KBM-7 (cell line): ENCODE measurements at regions of chr1 and their contacts with region 1.

Region 1: DNA sequence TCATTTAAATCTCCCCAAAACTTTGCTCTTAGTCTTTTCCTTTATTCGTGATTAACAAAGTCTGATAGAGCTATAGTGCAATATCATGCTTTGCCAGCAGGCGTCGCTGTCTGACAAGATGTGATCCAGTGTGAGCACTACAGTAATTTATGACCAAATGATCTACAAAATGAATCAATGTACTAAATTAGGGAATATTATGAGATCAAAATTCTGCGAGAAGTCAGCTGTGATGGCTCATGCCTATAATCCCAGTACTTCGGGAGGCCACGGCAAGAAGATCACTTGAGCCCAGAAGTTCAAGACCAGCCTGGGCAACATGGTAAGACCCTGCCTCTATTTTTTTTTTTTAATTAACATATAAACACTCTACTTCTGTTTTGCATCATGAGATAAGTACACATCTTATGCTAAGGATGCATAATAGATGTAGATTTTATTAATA is 3.6 kb upstream of the SPSB1 start:
- DNase-seq: peak; percentile 81

Region 2: DNA sequence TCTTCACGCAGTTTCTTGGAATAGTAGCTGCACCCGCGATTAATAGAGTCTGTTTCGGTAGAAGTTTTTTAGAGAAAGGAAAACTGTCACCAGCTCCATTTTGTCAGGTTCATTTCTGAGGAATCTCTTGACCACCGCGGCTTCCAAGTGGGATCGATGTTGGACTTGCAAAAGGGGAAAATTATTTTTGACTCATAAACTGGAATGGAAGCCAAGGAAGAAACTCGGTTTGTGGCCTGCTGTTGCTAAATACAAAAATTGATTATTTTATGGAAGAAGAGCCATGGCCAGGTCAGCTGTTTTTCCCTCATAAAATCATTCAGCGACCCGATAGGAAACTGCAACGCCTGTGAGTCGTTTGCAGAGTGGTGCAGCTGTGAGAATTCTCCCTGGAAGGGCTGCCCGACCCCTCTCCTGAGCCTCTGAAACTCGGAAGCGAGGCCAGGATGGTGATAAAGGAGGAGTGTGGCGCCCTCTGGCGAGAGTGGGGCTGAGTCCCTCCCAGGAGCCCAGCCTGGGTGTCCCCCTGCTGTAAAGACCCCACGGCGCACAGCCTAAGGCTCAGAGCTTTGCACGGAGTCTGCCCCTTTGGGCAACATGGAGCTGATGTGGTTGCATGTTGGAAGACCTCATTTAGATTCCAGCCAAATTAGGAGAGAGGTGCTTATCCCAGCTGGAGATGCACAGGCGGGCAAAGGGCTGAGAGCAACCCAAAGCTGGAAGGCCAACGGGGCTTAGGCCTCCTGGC is 166.5 kb after region 1 on chr1:
- in situ Hi-C with region 1: loop called (anchors 10 kb)
- DNase-seq: peak; percentile 70